Vagina (tissue), 2 donors: ENCODE measurements at regions of chr2 and their contacts with region 1.

Region 1: DNA sequence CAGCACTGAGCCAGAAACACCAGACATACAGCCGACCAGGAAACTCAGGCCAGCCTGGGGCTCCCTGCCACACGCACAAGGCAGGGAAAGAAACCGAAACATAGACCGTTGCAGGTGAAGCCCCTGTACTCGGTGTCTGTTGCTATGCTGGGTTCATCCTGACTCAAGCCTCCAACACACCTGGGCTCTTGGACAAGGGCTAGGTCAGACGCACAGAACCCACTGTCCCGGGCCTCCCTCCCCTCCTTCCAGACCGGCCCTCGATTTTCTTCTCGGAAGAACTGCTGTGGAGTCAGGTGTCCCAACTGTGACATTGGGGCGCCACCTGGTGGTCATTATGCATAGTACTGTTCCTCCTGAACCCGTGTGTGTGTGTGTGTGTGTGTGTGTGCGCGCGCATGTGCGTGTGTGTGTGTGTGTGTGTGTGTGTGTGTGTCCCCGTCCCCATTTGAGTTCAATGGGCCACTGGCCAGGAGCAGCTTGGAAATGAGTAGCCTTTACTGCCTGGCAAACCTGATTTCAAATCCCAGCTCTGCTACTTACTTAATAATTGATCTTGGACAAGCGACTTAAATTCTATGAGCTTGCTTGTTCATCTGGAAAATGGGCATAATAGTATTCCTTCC is 55.4 kb upstream of the GLI2 start:
- DNase-seq: no peak
- H3K4me3 ChIP-seq: no peak overlapping the region
- H3K27ac ChIP-seq: no peak overlapping the region
- H3K4me1 ChIP-seq: peaks cover 9% of the 10 kb centered on the region
- H3K27me3 ChIP-seq: no peaks in the 10 kb centered on the region
- CTCF ChIP-seq: peak in 2 of 3 experiments; percentile 89 to 92
- POLR2A ChIP-seq: no peak

Region 2: DNA sequence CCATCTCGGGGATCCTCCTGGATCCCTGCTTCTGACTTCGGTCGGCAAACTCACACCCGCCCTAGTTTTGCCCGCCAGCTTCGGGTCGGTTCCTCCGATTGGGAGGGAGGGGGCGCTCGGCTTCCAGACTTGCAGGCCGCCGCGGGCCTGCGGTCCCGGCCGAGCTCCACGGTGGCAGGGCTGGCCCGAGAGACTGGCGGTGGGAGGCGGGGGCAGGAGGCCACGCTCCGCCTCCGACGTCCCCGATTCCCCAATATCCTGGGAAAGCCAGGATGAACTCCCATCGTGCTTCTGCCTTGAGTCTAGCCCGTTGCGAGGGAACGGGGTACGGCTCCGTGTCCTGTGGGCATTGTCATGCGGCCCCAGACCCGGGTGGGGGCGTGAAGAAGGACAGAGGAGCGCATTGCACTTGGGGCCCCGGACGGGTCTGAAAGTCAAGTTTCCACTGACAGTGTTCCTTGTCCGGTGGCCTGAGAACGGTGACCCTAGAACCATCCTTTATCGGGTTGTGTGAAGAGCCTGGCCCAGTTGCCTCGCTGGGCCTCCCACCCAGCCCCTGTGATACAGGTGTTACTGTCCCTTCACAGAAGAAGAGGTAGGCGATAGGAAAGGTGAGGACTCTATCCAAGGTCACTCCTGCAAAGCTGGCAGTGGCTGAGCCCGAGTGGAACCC is 336.7 kb before region 1 on chr2:
- intact Hi-C with region 1: loop called (anchors 2 kb)
- DNase-seq: no peak
- H3K4me3 ChIP-seq: peak overlapping the region; percentile 61 to 76
- H3K27ac ChIP-seq: peak overlapping the region; percentile 86
- H3K4me1 ChIP-seq: peaks cover 40% of the 10 kb centered on the region
- H3K27me3 ChIP-seq: no peaks in the 10 kb centered on the region
- CTCF ChIP-seq: peak; percentile 62 to 80 (median 80)
- POLR2A ChIP-seq: no peak

Region 3: DNA sequence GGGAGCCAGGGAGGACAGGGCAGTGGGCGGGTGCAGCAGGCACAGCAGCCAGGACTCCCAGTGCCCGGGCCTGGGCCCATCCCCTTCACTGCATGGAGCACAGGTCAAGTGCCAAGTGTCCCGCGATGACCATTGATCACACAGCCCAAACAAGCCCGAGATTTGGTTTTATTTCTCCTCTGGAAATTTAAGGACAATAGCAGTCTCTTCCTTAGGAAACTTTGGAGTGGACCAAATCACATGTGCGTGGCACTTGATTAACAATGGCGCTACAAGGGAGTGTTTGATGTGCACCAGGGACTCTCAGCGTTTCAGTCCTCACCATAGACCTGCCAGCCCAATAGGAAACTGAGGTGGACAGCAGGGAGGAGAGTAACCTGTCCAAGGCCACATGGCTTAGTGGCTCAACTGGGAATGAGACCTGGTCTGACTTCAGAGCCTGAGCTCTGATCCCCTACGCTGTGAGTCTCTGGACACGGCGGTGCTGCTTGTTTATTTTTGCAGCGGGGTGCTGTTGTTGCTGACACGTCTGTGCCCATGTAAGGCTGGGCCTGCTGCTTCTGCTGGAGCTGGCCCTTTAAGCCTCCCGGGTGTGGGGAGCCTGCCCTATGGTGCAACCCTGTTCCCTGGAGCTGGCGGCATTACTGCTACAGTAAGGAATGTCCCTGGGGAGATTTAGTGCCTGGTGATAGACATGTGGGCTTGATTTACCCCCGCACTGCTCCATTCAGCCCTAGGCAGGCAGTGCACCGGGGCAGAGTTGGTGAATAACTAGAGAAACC is 140.1 kb before region 1 on chr2:
- intact Hi-C with region 1: loop called (anchors 10 kb)
- DNase-seq: no peak
- H3K4me3 ChIP-seq: no peak overlapping the region
- H3K27ac ChIP-seq: peak overlapping the region; percentile 41
- H3K4me1 ChIP-seq: peaks cover 37% of the 10 kb centered on the region
- H3K27me3 ChIP-seq: no peaks in the 10 kb centered on the region
- CTCF ChIP-seq: no peak
- POLR2A ChIP-seq: no peak